ENCODE measurements at regions of chr2 and their contacts with region 1.

Region 1: DNA sequence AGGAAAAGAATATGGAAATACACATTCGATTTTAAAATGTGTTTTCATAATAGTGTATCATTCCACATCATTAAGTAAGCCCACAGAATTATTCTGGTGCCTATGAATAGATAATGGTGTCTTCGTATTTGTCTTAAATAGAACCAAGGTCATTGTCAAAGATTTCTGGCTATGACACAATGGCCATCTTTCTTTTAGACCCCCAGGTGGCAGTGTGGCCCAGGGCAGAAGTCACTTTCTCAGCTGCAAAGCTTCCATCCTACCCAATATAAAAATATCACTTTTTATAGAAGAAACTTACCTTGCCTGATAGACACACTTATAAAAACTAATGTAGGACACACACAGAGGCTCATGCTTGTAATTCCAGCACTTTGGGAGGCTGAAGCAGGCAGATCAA is 57.5 kb downstream of the ZRANB3 start:
- DNase-seq: peak; percentile 42
- H3K4me3 ChIP-seq: no peak overlapping the region
- H3K27ac ChIP-seq: no peak overlapping the region
- H3K4me1 ChIP-seq: no peaks in the 10 kb centered on the region
- H3K27me3 ChIP-seq: no peaks in the 10 kb centered on the region
- CTCF ChIP-seq: peak; percentile 56 to 69
- POLR2A ChIP-seq: no peak

Region 2: DNA sequence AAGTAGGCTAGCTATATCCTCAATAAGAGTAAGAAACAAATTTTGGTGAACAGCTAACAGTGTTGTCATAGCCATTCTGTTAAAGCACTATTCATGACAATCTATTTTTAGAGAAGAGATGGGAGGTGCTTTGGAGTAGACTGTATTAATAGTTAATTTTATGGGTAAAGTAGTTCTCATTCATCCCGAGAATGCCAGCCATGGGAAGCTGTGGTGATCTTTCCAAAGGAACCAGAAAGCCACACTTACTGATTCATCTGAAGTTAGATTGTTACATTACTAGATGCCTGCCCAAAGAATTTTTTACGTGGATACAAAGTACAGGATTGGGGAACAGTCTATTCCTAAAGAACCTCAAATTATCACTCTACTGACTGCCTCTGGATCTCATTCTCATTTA is 17.1 kb before region 1 on chr2:
- CTCF ChIA-PET with region 1: interaction called, 31 read pairs
- POLR2A ChIA-PET with region 1: no interaction called
- dilution Hi-C with region 1: no loop called
- intact Hi-C with region 1: no loop called
- DNase-seq: no peak
- H3K4me3 ChIP-seq: no peak overlapping the region
- H3K27ac ChIP-seq: no peak overlapping the region
- H3K4me1 ChIP-seq: no peaks in the 10 kb centered on the region
- H3K27me3 ChIP-seq: no peaks in the 10 kb centered on the region
- CTCF ChIP-seq: no peak
- POLR2A ChIP-seq: no peak

Region 3: DNA sequence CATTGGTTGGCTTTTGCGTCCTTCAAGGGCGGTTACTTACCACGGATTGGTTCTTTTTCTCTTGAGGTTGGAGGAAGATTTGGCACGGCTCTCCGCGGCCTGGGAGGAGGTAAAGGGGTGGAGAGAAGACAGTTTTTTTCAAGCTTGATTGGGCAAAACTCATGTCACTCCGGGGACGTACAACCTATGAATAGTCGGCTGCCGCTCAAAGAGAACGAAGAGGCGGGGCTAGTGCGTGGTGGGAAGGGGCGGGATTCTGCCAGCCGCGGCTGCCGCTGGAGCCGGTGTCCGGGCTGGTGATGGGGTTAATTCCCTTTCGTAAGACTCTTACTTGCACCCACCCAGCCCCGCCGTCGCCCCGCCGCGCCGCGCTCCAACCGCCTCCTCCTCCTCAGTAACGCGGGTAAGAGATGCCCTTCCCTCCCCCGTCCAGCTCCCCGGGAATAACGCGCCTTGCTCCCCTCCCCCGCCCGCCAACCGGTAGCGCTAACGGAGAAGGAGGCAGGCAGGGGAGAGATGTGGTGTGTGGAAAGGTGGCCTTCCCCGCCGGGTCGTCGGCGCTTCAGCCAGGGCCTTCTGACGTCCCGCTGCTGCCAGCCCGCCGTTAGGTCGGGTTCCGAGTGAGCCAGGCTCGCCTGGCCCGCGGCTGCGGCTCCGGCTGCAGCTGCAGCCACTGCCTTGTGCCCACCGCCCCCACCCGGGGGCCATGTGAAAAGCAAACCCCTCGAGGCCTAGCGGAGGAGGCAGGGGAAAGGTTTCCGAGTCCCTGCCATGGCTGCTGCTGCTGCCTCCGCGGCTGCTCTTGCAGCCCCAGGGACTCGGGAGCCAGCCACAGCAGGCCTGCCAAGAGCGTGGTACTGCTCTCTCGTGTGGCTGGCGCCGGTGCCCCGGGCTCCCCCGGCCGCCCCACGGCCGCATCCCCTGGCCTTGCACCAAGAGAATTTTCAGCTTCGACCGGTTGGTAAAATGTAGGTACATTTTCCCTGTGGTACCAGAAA is 58.0 kb after region 1 on chr2 and contains the start of gene R3HDM1:
- CTCF ChIA-PET with region 1: interaction called, 14 read pairs
- POLR2A ChIA-PET with region 1: no interaction called
- dilution Hi-C with region 1: no loop called
- intact Hi-C with region 1: no loop called
- DNase-seq: peak; percentile 100
- H3K4me3 ChIP-seq: peak within 1 kb of the TSS; percentile 77 to 92 (median 88)
- H3K27ac ChIP-seq: peak within 1 kb of the TSS; percentile 93
- H3K4me1 ChIP-seq: peaks cover 7% of the 10 kb centered on the region
- H3K27me3 ChIP-seq: no peaks in the 10 kb centered on the region
- CTCF ChIP-seq: peak in 1 of 2 donors; percentile 15
- POLR2A ChIP-seq: peak; percentile 75
- total RNA-seq, gene R3HDM1: 36.2 and 36.6 TPM in 2 replicates

Region 4: DNA sequence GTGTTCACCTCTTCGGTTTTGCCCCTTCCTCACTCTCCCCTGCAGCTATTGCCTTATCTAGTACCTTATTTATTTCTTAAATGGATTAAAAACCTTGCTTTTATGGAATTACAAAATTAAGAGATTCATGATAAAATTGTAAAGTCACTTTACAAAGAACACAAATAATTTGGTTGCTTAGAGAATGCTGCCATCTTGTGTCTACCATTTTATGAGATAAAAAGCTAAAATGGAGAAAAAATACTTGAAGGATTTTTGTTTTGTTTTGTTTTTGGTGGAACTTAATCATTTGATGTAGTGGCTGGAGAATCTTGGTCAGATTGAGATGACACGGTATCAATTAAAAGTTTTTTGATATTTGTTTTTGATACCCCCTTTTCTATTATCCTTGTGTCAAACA is 127.3 kb after region 1 on chr2:
- CTCF ChIA-PET with region 1: interaction called, 58 read pairs
- POLR2A ChIA-PET with region 1: no interaction called
- dilution Hi-C with region 1: no loop called
- intact Hi-C with region 1: loop called (anchors 5 kb)
- DNase-seq: peak; percentile 9
- H3K4me3 ChIP-seq: no peak overlapping the region
- H3K27ac ChIP-seq: no peak overlapping the region
- H3K4me1 ChIP-seq: no peaks in the 10 kb centered on the region
- H3K27me3 ChIP-seq: no peaks in the 10 kb centered on the region
- CTCF ChIP-seq: no peak
- POLR2A ChIP-seq: no peak

Region 5: DNA sequence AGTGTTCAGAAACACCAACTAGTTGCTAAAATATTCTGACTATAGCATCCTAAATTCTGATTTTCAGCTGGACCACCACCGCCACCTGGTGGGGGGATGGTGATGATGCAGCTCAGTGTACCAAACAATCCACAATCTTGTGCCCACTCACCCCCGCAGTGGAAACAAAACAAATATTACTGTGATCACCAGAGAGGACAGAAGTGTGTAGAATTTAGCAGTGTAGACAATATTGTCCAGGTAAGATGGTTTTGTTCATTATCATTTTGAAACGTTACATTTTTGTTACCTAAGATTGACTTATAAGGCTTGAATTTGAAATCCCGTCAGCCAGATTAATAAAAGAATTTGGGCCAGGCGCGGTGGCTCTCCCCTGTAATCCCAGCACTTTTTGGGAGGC is 236.4 kb after region 1 on chr2:
- CTCF ChIA-PET with region 1: interaction called, 248 read pairs
- POLR2A ChIA-PET with region 1: no interaction called
- dilution Hi-C with region 1: no loop called
- intact Hi-C with region 1: loop called (anchors 1 kb)
- DNase-seq: peak; percentile 60
- H3K4me3 ChIP-seq: no peak overlapping the region
- H3K27ac ChIP-seq: no peak overlapping the region
- H3K4me1 ChIP-seq: no peaks in the 10 kb centered on the region
- H3K27me3 ChIP-seq: no peaks in the 10 kb centered on the region
- CTCF ChIP-seq: peak; percentile 76 to 88
- POLR2A ChIP-seq: no peak